ENCODE measurements at regions of chr7 and their contacts with region 1.

Region 1: GRCh38 chr7:7968543-7969305 is at the start of gene GLCCI1:
- DNase-seq: peak; percentile 95
- H3K4me3 Mint-ChIP-seq: peak within 1 kb of the TSS; percentile 89
- H3K27ac Mint-ChIP-seq: peak within 1 kb of the TSS; percentile 91
- H3K4me1 Mint-ChIP-seq: peaks cover 20% of the 10 kb centered on the region
- H3K27me3 Mint-ChIP-seq: no peaks in the 10 kb centered on the region
- total RNA-seq, gene GLCCI1: 13.4 and 13.5 TPM in 2 replicates

Region 2: DNA sequence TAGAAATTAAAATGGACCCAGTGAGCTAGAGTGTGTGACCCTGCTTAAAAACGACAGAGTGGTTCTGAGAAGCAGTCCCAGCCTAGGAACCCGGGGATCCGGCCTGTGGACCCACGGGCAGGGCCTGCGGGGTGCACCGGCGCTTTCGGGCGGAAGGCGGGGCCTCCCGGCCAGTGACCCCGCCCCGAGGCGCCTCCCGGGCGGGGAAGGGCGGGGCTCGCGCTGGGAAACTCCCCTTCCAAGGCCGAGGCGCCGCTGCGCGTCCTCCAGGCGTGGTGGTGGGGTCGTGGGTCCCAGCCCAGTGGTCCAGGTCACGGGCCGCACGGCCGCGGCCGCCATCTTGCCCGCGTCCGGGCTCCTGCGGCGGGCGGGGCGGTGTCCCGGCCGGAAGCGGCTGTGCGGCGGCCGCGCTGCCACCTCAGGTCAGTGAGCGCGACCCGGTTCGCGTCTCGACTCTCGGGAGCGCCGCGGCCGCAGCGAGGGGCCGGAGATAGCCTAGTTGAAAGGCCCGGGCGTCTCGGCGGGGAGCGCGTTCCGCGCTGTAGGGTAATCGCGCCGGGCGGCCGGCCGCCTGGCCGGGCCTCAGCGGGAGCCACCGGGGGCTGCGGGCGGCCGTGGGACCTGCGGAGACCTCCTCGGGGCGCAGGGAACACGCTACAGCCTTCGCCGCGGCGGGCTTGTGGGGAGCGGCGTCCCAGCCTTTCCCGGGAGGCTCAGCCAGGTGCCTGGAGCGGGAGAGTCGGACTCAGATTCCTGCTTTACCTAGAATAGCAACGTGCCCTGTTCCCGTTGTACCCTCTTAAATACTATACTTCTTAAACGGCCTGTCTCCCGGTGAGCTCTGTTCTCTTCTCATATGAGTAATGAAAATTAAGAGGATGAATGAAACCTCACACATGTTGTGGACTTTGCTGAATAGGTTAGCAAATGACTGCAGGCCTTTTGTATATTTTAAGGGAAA is 401.8 kb before region 1 on chr7 and contains the start of gene MIOS:
- intact Hi-C with region 1: loop called (anchors 1 kb)
- DNase-seq: peak; percentile 80
- H3K4me3 Mint-ChIP-seq: peak within 1 kb of the TSS; percentile 88
- H3K27ac Mint-ChIP-seq: peak within 1 kb of the TSS; percentile 73
- H3K4me1 Mint-ChIP-seq: peaks cover 35% of the 10 kb centered on the region
- H3K27me3 Mint-ChIP-seq: no peaks in the 10 kb centered on the region
- total RNA-seq, gene MIOS: 29.6 and 31.6 TPM in 2 replicates

Region 3: DNA sequence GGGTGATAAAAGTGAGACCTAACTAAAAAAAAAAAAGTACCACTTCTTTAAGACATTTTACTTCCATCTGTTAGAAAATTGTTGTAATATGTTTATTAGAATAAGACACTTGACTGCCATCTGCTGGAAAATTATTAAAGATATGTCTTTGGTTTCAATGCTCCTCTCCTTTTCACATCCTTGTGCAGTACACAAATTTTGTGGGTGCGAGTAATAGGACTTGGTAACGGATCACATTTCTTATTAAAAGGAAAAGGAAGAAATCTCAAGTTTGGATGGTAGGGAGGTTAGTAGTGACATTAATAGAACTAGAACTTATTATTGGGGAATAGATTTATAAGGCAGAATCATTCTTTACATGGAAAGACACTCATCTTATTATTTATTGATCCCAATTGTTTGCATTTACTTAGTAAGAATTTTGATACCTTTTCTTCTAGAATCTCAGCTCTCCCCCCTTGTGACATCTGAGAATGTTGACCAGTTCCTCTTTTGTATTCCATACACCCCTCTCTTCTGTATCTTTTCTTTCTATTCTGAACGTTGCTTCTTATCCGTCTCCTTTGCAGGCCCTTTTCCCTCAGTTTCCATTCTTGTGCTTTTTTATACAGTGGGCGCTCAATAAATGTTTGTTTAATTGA is 207.3 kb before region 1 on chr7:
- intact Hi-C with region 1: loop called (anchors 2 kb)
- DNase-seq: no peak
- H3K4me3 Mint-ChIP-seq: peak overlapping the region; percentile 90
- H3K27ac Mint-ChIP-seq: peak overlapping the region; percentile 15
- H3K4me1 Mint-ChIP-seq: peaks cover 33% of the 10 kb centered on the region
- H3K27me3 Mint-ChIP-seq: no peaks in the 10 kb centered on the region

Region 4: DNA sequence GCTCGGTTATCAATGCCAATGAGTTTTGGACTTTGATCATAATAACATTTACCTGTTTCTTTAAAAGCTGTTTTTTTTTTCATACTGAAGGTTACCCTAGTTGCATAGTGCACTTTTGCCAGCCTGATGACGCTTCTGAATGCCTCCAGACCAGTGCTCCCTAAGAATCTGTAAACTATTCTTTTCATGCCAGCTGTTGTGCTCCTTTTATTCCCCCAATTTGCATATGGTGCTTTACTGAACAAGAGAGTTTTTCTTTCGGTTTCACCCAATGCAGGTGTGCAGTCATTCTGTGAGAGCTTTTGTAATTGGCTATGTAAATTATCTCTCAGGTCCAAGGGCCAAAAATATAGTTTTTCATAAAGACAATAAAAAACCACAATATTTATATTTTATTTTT is 48.2 kb before region 1 on chr7:
- intact Hi-C with region 1: loop called (anchors 1 kb)
- DNase-seq: peak; percentile 12
- H3K4me3 Mint-ChIP-seq: no peak overlapping the region
- H3K27ac Mint-ChIP-seq: no peak overlapping the region
- H3K4me1 Mint-ChIP-seq: peaks cover 44% of the 10 kb centered on the region
- H3K27me3 Mint-ChIP-seq: peaks cover 3% of the 10 kb centered on the region

Region 5: DNA sequence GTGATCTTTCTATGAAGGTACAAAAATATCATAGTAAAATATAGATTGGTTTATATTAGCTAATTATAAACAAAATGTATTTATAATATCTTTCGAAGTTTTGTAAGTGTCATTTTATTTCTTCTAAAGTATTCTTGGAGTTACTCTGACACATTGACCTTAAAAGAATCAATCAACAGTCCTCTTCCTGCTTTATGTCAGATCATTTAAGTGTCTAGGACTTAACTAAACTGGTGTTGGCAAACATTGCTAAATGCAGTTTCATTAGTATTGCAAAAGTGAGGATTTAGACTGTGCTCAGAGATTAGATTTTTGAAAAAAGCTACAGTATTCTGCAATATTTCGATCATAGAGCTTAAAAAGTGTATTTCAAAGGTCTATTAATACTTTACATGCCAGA is 10.1 kb after region 1 on chr7:
- intact Hi-C with region 1: no loop called
- DNase-seq: no peak
- H3K4me3 Mint-ChIP-seq: no peak overlapping the region
- H3K27ac Mint-ChIP-seq: no peak overlapping the region
- H3K4me1 Mint-ChIP-seq: peaks cover 27% of the 10 kb centered on the region
- H3K27me3 Mint-ChIP-seq: no peaks in the 10 kb centered on the region

Region 6: DNA sequence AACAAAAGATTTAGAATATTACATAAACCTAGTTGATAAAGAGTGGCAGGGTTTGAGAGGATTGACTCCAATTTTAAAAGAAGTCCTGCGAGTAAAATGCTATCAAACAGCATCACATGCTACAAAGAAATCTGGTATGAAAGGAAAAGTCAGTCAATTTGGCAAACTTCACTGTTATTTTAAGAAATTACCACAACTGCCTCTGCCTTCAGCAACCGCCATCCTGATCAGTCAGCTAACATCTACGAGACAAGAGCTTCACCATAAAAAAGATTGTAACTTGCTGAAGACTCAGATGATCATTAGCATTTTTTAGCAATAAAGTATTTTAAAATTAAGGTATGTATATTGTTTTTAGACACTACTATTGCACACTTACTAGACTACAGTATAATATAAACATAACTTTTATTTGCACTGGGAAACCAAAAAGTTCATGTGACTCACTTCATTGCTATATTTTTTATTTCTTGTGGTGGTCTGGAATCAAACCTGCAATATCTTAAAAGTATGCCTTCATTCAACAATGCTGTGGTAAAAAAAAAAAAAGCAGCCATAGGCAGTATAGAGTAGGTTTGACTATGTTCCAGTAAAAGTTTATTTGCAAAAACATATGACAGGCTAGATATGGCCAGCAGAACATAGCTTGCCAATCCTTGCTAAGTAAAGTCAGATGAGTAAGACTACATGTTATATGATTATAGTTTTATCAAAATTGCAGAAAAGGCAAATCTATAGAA is 74.2 kb after region 1 on chr7:
- intact Hi-C with region 1: loop called (anchors 2 kb)
- DNase-seq: no peak
- H3K4me3 Mint-ChIP-seq: no peak overlapping the region
- H3K27ac Mint-ChIP-seq: peak overlapping the region; percentile 61
- H3K4me1 Mint-ChIP-seq: peaks cover 74% of the 10 kb centered on the region
- H3K27me3 Mint-ChIP-seq: no peaks in the 10 kb centered on the region

Region 7: GRCh38 chr7:8143151-8143874 is 174.6 kb after region 1 on chr7:
- intact Hi-C with region 1: no loop called
- DNase-seq: no peak
- H3K4me3 Mint-ChIP-seq: no peak overlapping the region
- H3K27ac Mint-ChIP-seq: no peak overlapping the region
- H3K4me1 Mint-ChIP-seq: peaks cover 11% of the 10 kb centered on the region
- H3K27me3 Mint-ChIP-seq: no peaks in the 10 kb centered on the region

Region 8: DNA sequence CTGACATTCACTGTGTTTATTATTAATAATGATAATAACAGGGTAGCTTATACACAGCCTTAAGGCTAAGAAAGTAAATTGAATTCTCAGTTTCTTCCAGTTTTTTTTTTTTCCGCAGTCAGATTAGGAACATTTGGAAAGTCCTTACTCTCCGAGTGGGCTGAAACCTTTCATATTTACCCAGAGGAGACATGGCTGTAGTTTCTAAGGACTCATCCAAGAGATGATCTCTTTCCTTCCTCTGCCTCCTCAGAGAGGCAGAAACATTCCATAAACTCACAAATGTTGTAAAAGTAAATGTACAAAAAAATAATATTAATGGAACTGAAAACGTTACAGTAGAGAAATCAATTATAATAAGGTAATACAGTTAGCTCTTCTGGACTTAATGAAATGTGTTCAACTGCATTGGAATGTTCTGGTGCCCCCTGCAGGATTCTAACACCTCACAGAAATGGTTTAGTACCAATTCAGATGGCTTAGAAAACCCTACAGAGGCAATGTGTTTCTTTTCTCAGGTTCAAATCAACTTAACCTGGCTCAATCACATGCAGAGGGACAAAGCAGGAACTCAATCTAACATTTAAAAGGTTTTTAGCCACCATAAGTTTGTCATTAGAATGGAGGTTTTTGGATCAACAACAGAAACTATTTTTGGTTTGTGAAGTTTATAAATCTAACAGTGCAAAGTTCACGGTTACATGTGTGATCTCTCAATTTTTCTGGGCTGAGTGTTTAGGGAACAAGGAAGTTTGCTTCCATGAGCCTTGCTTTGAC is 221.6 kb after region 1 on chr7:
- intact Hi-C with region 1: loop called (anchors 1 kb)
- DNase-seq: peak; percentile 41
- H3K4me3 Mint-ChIP-seq: no peak overlapping the region
- H3K27ac Mint-ChIP-seq: no peak overlapping the region
- H3K4me1 Mint-ChIP-seq: peaks cover 41% of the 10 kb centered on the region
- H3K27me3 Mint-ChIP-seq: peaks cover 5% of the 10 kb centered on the region